ENCODE measurements at regions of chr15 and their contacts with region 1.

Region 1: GRCh38 chr15:48877630-48878595 is at the start of gene EID1:
- DNase-seq: peak; percentile 93 to 94 (median 94)
- ATAC-seq: peak; percentile 99
- H3K4me3 ChIP-seq: peak within 1 kb of the TSS; percentile 72 to 76
- H3K27ac ChIP-seq: peak within 1 kb of the TSS; percentile 69 to 88 (median 82)
- H3K4me1 ChIP-seq: peaks cover 19% of the 10 kb centered on the region
- H3K27me3 ChIP-seq: peaks cover 0 to 3% of the 10 kb centered on the region in 2 donors
- CTCF ChIP-seq: peak in 1 of 7 experiments; percentile 17
- POLR2A ChIP-seq: peak in 2 of 3 donors; percentile 76 to 77
- total RNA-seq, gene EID1: 60.0 to 182 TPM

Region 2: DNA sequence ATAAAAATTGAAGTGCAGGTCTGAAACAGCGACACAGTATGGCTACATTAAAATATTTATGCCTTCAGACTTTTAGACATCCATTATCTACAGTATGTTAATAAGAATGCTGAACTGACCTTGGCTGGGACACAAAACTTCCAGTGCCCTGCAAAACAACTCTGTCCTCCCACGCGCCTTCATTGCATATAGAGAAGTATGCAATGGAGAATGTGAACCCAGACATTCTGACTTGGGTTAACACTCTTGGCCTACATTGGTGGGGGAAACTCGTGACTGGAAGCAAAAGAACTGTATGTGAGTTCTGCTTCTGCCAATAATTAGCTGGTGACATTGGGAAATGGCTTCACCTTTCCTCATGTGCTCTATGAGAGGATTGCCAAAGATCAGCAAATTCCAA is 867.6 kb before region 1 on chr15:
- intact Hi-C with region 1: no loop called
- DNase-seq: no peak
- ATAC-seq: no peak
- H3K4me3 ChIP-seq: no peak overlapping the region
- H3K27ac ChIP-seq: no peak overlapping the region
- H3K4me1 ChIP-seq: no peaks in the 10 kb centered on the region
- H3K27me3 ChIP-seq: no peaks in the 10 kb centered on the region
- CTCF ChIP-seq: no peak
- POLR2A ChIP-seq: no peak

Region 3: DNA sequence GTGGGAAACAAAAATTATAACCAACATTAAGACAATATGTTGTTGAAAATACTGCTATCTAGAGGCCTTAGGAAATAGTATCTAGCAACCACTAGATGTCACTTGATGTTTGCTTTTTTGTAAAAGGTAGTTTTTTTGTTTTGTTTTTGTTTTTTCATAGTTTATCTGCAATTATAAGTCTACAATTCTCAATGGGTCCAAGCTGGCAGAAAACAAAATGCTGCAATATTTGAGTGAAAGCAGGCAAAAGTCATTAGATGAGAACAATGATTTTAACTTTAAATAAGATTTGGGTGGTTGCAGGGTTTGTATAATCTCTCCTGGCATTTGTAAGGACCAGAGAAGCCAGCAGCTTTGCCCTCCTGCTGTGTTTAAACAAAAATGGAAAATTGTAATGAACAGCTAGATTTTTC is 519.7 kb before region 1 on chr15:
- intact Hi-C with region 1: no loop called
- DNase-seq: no peak
- ATAC-seq: no peak
- H3K4me3 ChIP-seq: no peak overlapping the region
- H3K27ac ChIP-seq: no peak overlapping the region
- H3K4me1 ChIP-seq: no peaks in the 10 kb centered on the region
- H3K27me3 ChIP-seq: no peaks in the 10 kb centered on the region
- CTCF ChIP-seq: peak in 6 of 7 experiments; percentile 31 to 57 (median 50)
- POLR2A ChIP-seq: no peak

Region 4: DNA sequence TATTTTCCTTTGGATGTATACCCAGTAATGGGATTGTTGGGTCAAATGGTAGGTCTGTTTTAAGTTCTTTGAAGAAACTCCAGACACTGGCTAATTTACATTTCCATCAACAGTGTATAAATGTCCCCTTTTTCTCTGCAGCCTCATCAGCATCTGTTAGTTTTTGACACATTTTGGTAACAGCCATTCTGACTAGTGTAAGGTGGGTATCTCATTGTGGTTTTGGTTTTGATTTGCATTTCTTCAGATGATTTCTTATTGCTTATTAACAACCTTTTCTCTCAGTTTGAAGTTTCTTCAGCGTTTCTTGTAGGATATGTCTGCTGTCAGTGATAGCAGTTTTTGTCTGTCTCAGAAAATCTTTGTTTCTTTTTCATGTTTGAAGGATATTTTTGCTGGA is 307.6 kb after region 1 on chr15:
- intact Hi-C with region 1: no loop called
- DNase-seq: no peak
- ATAC-seq: no peak
- H3K4me3 ChIP-seq: no peak overlapping the region
- H3K27ac ChIP-seq: no peak overlapping the region
- H3K4me1 ChIP-seq: peaks cover 13% of the 10 kb centered on the region
- H3K27me3 ChIP-seq: no peaks in the 10 kb centered on the region
- CTCF ChIP-seq: no peak
- POLR2A ChIP-seq: no peak

Region 5: DNA sequence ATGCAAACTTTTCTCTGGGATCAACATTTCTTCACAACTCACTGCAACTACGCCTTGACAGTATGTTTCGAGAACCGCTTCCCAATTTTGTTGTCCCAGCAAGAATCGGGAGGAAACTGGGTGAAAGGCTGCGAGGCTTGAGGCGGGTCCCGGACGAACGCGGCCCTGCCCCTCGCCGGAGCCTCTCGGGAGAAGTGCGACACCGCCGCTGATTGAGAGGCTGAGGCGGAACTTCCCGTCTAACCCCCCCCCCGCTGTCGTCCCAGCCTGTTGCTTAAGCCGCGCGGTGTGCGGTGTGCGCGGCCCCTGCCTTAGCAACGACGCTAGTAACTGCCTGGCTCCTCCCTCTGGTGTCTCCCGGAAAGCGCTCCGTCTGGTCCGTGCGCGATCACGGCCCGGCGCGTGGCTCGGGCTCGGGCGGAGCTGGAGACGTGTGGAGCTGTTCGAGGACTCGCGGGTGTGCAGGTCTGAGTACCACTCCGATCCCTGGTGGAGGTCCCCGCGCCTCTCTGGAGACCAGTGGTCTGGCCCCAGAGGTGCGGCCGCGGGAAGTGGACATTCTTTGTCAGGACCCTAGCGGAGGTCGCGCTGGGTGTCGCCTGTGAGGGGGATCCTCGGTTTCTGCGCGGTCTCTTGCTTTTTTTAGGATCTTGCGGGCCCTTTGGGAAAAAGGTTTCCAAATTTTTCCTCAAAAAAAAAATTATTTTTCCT is 742.9 kb after region 1 on chr15 and contains the starts of genes DTWD1 and FAM227B:
- intact Hi-C with region 1: loop called (anchors 10 kb)
- DNase-seq: peak; percentile 97 to 98 (median 98)
- ATAC-seq: peak; percentile 99
- H3K4me3 ChIP-seq: peak within 1 kb of the TSS; percentile 68 to 78
- H3K27ac ChIP-seq: peak within 1 kb of the TSS; percentile 90 to 95 (median 92)
- H3K4me1 ChIP-seq: peaks cover 36% of the 10 kb centered on the region
- H3K27me3 ChIP-seq: no peaks in the 10 kb centered on the region
- CTCF ChIP-seq: peak in 4 of 7 experiments; percentile 2 to 26 (median 24)
- POLR2A ChIP-seq: peak; percentile 92 to 98 (median 97)
- total RNA-seq, gene DTWD1: 12.5 to 22.1 TPM
- total RNA-seq, gene FAM227B: 2.1 TPM in 1 of 2 donors, not detected in the other

Measured in body of pancreas (tissue), 4 donors.